Panc1 (cell line): ENCODE measurements at regions of chr9 and their contacts with region 1.

Region 1: GRCh38 chr9:33044127-33044673 is 19.1 kb downstream of the DNAJA1 start:
- DNase-seq: peak; percentile 73
- ATAC-seq: peak; percentile 90
- H3K4me3 ChIP-seq: peak overlapping the region; percentile 60 to 72
- H3K27ac ChIP-seq: peak overlapping the region; percentile 93
- H3K4me1 ChIP-seq: peaks cover 23% of the 10 kb centered on the region
- H3K27me3 ChIP-seq: no peaks in the 10 kb centered on the region
- CTCF ChIP-seq: no peak

Region 2: DNA sequence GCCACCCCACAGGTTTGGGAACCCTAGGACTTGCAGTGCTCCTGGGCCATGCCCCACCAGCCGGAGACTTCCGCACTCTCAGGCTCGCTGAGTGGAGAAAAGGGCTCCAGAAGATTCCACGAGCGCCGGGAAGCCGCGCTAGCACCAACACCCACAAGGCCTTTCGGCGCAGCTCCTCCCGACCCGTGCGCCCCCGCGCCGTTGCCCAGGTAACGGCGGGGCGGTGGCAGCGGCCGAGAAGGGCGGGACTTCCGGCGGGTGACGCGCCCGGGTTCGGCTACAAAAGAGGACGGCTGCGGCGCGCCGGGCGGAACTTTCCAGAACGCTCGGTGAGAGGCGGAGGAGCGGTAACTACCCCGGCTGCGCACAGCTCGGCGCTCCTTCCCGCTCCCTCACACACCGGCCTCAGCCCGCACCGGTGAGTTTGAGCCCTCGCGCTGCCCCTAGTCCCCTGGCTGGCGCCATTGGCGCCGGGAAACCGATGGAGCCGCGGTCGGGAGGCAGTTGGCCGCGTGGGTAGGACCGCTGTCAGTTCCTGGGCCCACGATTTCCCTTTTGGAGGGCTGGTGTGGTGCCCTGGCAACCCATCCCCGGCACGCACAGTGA is 19.1 kb before region 1 on chr9 and contains the start of gene DNAJA1:
- CTCF ChIA-PET with region 1: interaction called, 3 read pairs
- POLR2A ChIA-PET with region 1: interaction called, 11 read pairs
- in situ Hi-C with region 1: no loop called
- intact Hi-C with region 1: no loop called
- DNase-seq: peak; percentile 41
- ATAC-seq: peak; percentile 97
- H3K4me3 ChIP-seq: peak within 1 kb of the TSS; percentile 81 to 87
- H3K27ac ChIP-seq: peak within 1 kb of the TSS; percentile 93
- H3K4me1 ChIP-seq: peaks cover 40% of the 10 kb centered on the region
- H3K27me3 ChIP-seq: no peaks in the 10 kb centered on the region
- CTCF ChIP-seq: no peak
- total RNA-seq, gene DNAJA1: 246 TPM

Region 3: DNA sequence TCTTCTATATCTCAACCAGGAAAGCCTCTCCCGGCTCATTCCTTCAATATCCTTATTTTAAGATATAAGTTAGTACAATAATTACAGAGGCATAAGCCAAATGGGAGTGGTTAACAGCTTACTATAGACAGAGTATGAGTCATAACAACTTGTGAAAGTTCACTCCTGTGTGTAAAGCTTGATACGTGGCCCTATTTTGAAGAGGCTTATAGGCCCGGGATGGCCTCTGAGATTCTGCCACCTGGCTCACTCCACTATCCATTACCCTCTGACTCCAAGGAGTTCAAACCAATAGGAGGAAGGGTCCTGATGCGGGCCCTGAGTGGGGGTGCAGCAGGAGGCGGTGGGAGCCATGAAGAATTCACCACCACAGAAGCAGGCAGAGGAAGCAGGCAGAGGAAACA is 86.3 kb after region 1 on chr9:
- CTCF ChIA-PET with region 1: no interaction called
- POLR2A ChIA-PET with region 1: no interaction called
- in situ Hi-C with region 1: no loop called
- intact Hi-C with region 1: no loop called
- DNase-seq: no peak
- ATAC-seq: 0 out of 2 replicates have a peak, but pooled peaks have one; percentile 34
- H3K4me3 ChIP-seq: no peak overlapping the region
- H3K27ac ChIP-seq: no peak overlapping the region
- H3K4me1 ChIP-seq: no peaks in the 10 kb centered on the region
- H3K27me3 ChIP-seq: no peaks in the 10 kb centered on the region
- CTCF ChIP-seq: no peak

Region 4: GRCh38 chr9:33177639-33178038 is 133.4 kb after region 1 on chr9:
- CTCF ChIA-PET with region 1: no interaction called
- POLR2A ChIA-PET with region 1: no interaction called
- in situ Hi-C with region 1: no loop called
- intact Hi-C with region 1: no loop called
- DNase-seq: no peak
- ATAC-seq: no peak
- H3K4me3 ChIP-seq: no peak overlapping the region
- H3K27ac ChIP-seq: no peak overlapping the region
- H3K4me1 ChIP-seq: no peaks in the 10 kb centered on the region
- H3K27me3 ChIP-seq: peaks cover 3% of the 10 kb centered on the region; the same call in 1 of the 2 replicates
- CTCF ChIP-seq: no peak